ENCODE measurements at regions of chr3 and their contacts with region 1.

Region 1: GRCh38 chr3:127105587-127105986 is 87.3 kb upstream of the PRR23E start:
- DNase-seq: no peak
- H3K4me3 ChIP-seq: no peak overlapping the region
- H3K27ac ChIP-seq: no peak overlapping the region
- H3K4me1 ChIP-seq: peaks cover 0 to 11% (median 1%) of the 10 kb centered on the region in 4 experiments; a peak in 2 of 7 replicates
- H3K27me3 ChIP-seq: no peaks in the 10 kb centered on the region; a peak in 1 of 7 replicates
- CTCF ChIP-seq: peak in 2 of 3 experiments; percentile 26 to 27; a peak in 2 of 4 replicates
- EP300 ChIP-seq: no peak
- POLR2A ChIP-seq: no peak
- RAD21 ChIP-seq: peak; percentile 3 to 22; a peak in 1 of 4 replicates

Region 2: GRCh38 chr3:127120851-127121647 is 15.5 kb after region 1 on chr3:
- CTCF ChIA-PET with region 1: interaction called, 10 read pairs
- POLR2A ChIA-PET with region 1: no interaction called
- DNase-seq: no peak
- H3K4me3 ChIP-seq: no peak overlapping the region
- H3K27ac ChIP-seq: no peak overlapping the region
- H3K4me1 ChIP-seq: peaks cover 0 to 10% (median 3%) of the 10 kb centered on the region in 4 experiments; a peak in 2 of 7 replicates
- H3K27me3 ChIP-seq: no peaks in the 10 kb centered on the region
- CTCF ChIP-seq: no peak
- EP300 ChIP-seq: no peak
- POLR2A ChIP-seq: no peak
- RAD21 ChIP-seq: no peak

Region 3: DNA sequence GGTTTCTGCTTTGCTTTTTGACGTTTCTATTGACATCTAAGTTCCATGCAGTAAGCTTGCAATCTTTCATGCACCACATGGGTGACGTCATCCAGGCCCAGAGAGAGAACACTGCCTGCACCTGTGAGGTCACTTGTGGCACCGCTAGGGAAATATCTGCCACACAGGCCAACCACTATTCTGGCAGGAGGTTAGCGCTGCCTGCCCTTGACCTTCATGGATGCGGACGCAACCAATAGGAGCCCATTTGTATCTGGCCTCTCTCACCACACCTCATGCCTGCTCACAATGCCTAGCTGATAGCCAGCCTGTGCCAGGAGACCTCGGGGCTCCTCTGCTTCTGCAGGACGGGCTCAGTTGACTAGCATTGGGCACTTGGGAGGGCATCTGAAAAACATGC is 31.5 kb after region 1 on chr3:
- CTCF ChIA-PET with region 1: no interaction called
- POLR2A ChIA-PET with region 1: no interaction called
- DNase-seq: no peak
- H3K4me3 ChIP-seq: no peak overlapping the region
- H3K27ac ChIP-seq: no peak overlapping the region
- H3K4me1 ChIP-seq: peaks cover 5 to 31% (median 19%) of the 10 kb centered on the region in 4 experiments
- H3K27me3 ChIP-seq: peaks cover 3 to 27% (median 26%) of the 10 kb centered on the region in 4 experiments
- CTCF ChIP-seq: no peak
- EP300 ChIP-seq: no peak
- POLR2A ChIP-seq: no peak
- RAD21 ChIP-seq: no peak